Posterior vena cava (tissue), 2 donors: ENCODE measurements at regions of chr19 and their contacts with region 1.

Region 1: DNA sequence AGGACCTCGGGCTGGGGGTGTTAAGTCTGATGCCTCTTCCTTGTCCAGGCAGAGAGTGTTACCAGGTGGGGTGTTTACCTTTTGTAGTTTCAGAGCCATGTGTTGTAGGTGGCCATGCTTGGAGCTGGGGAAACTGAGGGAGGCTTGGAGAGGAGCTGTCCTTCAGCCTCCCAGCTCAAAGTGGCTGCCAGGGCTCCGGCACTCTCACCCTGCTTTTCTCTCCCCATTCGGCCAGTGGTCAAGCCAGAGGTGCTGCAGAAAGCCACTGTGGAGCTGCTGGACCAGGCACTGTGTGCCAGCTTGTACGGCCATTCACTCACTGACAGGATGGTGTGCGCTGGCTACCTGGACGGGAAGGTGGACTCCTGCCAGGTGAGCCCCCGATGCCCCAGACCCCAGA is 17.4 kb downstream of the TIMM13 start:
- DNase-seq: no peak

Region 2: GRCh38 chr19:1260636-1261537 is 1149.1 kb before region 1 on chr19:
- intact Hi-C with region 1: no loop called
- DNase-seq: peak; percentile 99

Region 3: GRCh38 chr19:2440515-2440914 is 30.5 kb after region 1 on chr19:
- intact Hi-C with region 1: loop called in 1 of 2 experiments (anchors 1 kb)
- DNase-seq: no peak

Region 4: GRCh38 chr19:2461751-2462634 is 52.0 kb after region 1 on chr19:
- intact Hi-C with region 1: no loop called
- DNase-seq: peak; percentile 88